H1 (cell line): ENCODE measurements at regions of chr11 and their contacts with region 1.

Region 1: GRCh38 chr11:68003846-68004550 is at the start of gene UNC93B1:
- DNase-seq: peak in 1 of 2 experiments; percentile 84
- H3K4me3 ChIP-seq: peak within 1 kb of the TSS; percentile 39 to 76 (median 44)
- H3K27ac ChIP-seq: no peak within 1 kb of the TSS
- H3K4me1 ChIP-seq: peaks cover 0 to 12% (median 4%) of the 10 kb centered on the region in 4 experiments; a peak in 5 of 7 replicates
- H3K27me3 ChIP-seq: peaks cover 0 to 5% (median under 1%) of the 10 kb centered on the region in 4 experiments; a peak in 2 of 7 replicates
- CTCF ChIP-seq: no peak
- EP300 ChIP-seq: no peak
- POLR2A ChIP-seq: no peak
- RAD21 ChIP-seq: no peak
- total RNA-seq, gene UNC93B1: 18.9 and 19.2 TPM in 2 replicates

Region 2: GRCh38 chr11:68020575-68020974 is 16.6 kb after region 1 on chr11:
- CTCF ChIA-PET with region 1: interaction called, 40 read pairs
- POLR2A ChIA-PET with region 1: interaction called, 17 read pairs
- DNase-seq: peak in 1 of 2 experiments; percentile 71
- H3K4me3 ChIP-seq: no peak overlapping the region
- H3K27ac ChIP-seq: no peak overlapping the region
- H3K4me1 ChIP-seq: peaks cover 0 to 12% (median 4%) of the 10 kb centered on the region in 4 experiments; a peak in 4 of 7 replicates
- H3K27me3 ChIP-seq: no peaks in the 10 kb centered on the region
- CTCF ChIP-seq: peak in 2 of 3 experiments; percentile 67 to 83; a peak in 3 of 4 replicates
- EP300 ChIP-seq: no peak
- POLR2A ChIP-seq: no peak
- RAD21 ChIP-seq: peak; percentile 45 to 59

Region 3: GRCh38 chr11:68251765-68252164 is 247.8 kb after region 1 on chr11:
- CTCF ChIA-PET with region 1: no interaction called
- POLR2A ChIA-PET with region 1: no interaction called
- DNase-seq: no peak
- H3K4me3 ChIP-seq: no peak overlapping the region
- H3K27ac ChIP-seq: no peak overlapping the region
- H3K4me1 ChIP-seq: peaks cover 0 to 7% (median 4%) of the 10 kb centered on the region in 4 experiments; a peak in 5 of 7 replicates
- H3K27me3 ChIP-seq: no peaks in the 10 kb centered on the region
- CTCF ChIP-seq: no peak
- EP300 ChIP-seq: no peak
- POLR2A ChIP-seq: no peak
- RAD21 ChIP-seq: no peak